ENCODE measurements at regions of chr20 and their contacts with region 1.

Region 1: DNA sequence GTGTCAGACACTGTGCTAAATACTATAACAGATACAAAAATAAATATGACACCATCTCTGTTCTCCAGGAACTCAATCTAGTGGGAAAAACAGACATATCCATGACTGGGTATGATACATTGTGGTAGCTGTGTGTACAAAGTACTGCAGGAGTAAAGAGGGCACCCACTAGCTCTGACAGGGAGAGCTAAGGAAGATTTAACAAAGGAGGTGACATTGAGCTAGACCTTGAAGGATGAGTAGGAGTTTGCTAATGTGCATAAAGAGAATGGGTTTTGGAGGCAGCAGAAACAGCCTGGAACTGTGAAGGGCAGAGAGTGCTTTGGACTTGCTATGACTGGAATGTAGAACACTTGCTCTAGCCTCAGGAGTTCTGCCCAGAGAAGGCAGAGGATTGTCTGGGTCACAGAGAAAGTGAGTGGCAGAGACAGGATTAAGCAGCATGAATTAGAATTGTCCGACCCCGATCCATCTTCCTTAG is 14.4 kb downstream of the MMP24 start:
- DNase-seq: no peak
- H3K4me3 ChIP-seq: no peak overlapping the region
- H3K27ac ChIP-seq: no peak overlapping the region
- H3K4me1 ChIP-seq: no peaks in the 10 kb centered on the region
- H3K27me3 ChIP-seq: peaks cover 26 to 33% of the 10 kb centered on the region in 2 experiments
- CTCF ChIP-seq: no peak
- POLR2A ChIP-seq: no peak

Region 2: DNA sequence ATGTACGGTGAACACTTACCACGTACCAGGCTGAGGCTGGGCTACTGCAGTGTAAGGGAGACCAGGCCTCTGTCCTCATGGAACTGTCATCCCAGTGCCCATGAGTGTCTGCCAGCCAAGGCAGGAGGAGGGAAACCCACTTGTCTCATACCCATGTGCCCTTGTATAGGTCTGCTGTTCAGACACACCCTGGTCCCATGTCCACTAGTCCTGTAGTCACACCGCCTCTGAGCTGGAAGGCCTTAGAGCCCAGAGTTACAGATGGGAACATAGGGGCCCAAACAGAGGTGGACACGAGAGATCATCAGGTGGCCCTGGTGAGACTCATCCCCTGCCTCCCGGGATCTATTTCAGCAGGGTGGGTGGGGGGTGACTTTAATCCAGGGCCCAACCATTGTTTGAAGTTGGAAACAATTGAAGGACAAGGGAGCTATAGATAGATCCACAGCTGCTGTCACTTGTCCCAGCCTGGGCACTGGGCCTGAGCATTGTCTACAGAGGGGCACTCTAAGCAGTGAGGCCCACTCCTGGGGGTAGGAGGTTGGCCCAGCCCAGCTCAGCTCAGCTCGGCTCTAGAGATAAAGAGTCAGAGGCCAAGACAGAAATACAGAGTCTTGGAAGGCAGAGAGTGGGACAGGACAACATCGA is 270.5 kb before region 1 on chr20:
- CTCF ChIA-PET with region 1: no interaction called
- POLR2A ChIA-PET with region 1: interaction called, 10 read pairs
- dilution Hi-C with region 1: no loop called
- intact Hi-C with region 1: no loop called
- DNase-seq: no peak
- H3K4me3 ChIP-seq: no peak overlapping the region
- H3K27ac ChIP-seq: no peak overlapping the region
- H3K4me1 ChIP-seq: no peaks in the 10 kb centered on the region
- H3K27me3 ChIP-seq: no peaks in the 10 kb centered on the region
- CTCF ChIP-seq: no peak
- POLR2A ChIP-seq: no peak

Region 3: GRCh38 chr20:34983995-34984735 is 256.7 kb before region 1 on chr20:
- CTCF ChIA-PET with region 1: no interaction called
- POLR2A ChIA-PET with region 1: no interaction called
- dilution Hi-C with region 1: no loop called
- intact Hi-C with region 1: no loop called
- DNase-seq: no peak
- H3K4me3 ChIP-seq: no peak overlapping the region
- H3K27ac ChIP-seq: no peak overlapping the region
- H3K4me1 ChIP-seq: no peaks in the 10 kb centered on the region
- H3K27me3 ChIP-seq: peaks cover 5% of the 10 kb centered on the region in 2 experiments
- CTCF ChIP-seq: no peak
- POLR2A ChIP-seq: no peak

Measured in endothelial cell of umbilical vein (primary cell).